GM13976 (cell line): ENCODE measurements at regions of chr20 and their contacts with region 1.

Region 1: GRCh38 chr20:49982346-49983122 is at the start of gene SNAI1:
- DNase-seq: peak; percentile 99
- CTCF ChIP-seq: peak; percentile 59

Region 2: DNA sequence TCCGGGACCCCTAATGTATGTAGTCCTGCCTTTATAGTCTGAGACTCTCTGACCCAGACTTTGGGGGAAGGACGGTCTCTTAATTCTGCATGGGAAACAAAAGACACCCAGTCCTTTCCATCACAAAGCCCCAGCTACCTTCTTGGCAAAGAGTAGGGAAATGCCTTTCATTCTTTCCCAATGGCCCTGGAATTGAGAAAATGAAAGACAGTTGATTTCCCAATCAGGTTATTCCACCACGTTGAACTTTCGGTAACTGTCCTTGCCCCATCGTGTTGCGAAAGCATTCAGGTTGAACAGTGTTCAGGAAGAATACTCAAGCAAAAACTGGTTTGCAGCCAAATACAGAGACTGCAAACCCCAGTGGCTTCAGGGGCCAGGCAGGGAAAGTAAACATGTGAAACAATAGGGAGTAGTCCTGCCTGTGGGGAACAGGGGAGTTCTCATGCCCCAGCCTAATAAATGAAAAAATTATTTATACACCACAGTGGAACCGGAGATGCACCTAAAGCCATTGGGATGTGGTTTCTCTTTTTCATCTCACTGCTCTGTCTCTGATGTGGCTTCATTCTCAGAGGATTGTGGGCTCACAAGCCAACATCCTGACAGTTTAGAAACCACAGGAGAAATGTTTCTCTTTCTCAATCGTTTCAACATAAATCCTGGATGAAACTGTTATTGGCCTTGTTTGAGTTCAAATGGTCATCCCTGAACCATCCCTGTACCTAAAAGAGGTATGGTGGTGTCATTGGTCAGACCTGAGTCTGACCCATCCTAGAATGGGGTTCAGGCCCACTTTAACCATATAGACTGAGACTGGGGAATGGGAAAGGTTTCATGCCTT is 214.1 kb before region 1 on chr20:
- in situ Hi-C with region 1: no loop called
- DNase-seq: no peak
- CTCF ChIP-seq: no peak

Region 3: GRCh38 chr20:49890471-49891361 is 91.8 kb before region 1 on chr20:
- in situ Hi-C with region 1: no loop called
- DNase-seq: no peak
- CTCF ChIP-seq: no peak

Region 4: GRCh38 chr20:50054626-50055511 is 72.3 kb after region 1 on chr20:
- in situ Hi-C with region 1: loop called (anchors 5 kb)
- DNase-seq: no peak
- CTCF ChIP-seq: no peak

Region 5: DNA sequence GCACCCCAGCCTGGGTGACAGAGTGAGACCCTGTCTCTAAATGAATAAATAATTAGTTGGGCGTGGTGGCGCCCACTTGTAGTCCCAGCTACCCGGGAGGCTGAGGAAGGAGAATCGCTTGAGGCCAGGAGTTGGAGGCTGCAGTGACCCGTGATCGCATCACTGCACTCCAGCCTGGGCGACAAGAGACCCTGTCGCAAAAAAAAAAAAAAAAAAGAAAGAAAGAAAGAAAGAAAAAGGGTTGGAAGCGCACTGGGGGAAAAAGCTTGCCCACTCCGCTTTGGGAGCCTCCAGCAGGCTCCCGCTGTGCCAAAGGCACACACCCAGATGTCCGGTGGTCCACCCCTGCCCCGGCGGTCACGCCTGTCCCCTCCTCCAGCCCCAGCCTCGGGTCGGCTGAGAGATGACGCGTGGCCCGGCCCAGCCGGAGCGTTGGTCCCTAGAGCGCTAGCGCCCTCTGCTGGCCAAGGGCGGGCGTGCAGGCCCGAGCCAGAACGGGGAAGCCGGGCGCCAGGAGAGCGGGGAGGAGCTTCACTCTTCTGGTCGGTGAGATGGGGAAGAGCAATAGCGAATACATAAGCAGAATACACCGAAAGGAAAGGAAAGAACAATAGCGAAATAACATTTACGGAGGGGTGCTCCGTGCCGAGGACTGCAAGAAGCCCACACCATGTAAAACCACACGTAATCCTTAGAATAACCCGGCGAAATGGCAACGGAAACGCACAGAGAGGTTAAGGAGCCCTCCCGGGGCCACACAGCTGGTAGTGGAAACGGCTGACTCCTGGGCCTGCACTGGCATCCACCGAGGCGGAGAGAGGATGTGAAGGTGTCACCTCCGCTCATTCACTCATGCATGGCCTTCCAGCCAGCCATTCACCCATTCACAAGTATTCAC is 88.7 kb after region 1 on chr20:
- in situ Hi-C with region 1: loop called (anchors 10 kb)
- DNase-seq: peak; percentile 97
- CTCF ChIP-seq: peak; percentile 99